Esophagus muscularis mucosa (tissue), 4 donors: ENCODE measurements at regions of chr2 and their contacts with region 1.

Region 1: GRCh38 chr2:36530178-36530982 is 67.6 kb downstream of the FEZ2 start:
- DNase-seq: no peak
- H3K4me3 ChIP-seq: no peak overlapping the region
- H3K27ac ChIP-seq: no peak overlapping the region
- H3K4me1 ChIP-seq: peaks cover 0 to 14% (median 4%) of the 10 kb centered on the region in 4 donors
- H3K27me3 ChIP-seq: no peaks in the 10 kb centered on the region
- CTCF ChIP-seq: no peak
- EP300 ChIP-seq: no peak
- POLR2A ChIP-seq: no peak

Region 2: DNA sequence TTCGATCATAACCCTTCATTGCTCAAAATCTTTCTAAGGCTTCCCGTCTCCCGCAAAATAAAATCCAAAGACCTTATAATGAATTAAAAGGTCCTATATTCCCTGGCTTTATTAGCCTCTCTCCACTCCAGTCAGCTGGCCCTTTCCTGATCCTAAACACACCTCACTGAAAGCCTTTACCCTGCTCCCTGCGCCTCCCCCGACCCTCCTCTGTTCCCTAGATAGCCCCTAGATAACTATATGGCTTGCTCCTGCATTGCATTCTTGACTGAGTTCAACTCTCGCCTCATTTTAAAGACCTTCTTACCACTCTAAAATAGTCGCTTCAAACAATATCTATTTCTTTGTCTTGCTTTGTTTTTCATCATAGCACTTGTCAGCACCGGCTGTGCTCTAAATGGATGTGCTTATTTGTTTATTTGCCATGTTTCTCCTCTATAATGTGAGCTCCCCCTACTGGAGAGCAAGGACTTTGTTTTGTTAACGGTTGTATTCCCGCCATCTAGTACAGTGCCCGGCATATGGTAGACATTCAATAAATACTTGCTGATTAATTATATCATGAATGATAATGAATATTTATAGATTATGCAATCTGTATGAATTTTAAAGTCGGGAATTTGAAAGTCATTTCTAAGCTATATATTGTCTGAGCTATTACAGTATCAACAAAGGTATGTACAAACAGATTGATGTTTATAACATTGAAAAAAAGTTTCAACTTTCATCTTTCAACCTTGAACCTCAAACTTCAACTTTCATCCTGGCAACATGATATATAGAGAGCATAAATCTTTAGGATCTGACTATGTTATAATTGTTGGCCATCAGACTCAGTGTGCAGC is 133.7 kb after region 1 on chr2:
- intact Hi-C with region 1: loop called (anchors 10 kb)
- DNase-seq: no peak
- H3K4me3 ChIP-seq: no peak overlapping the region
- H3K27ac ChIP-seq: peak overlapping the region in 1 of 4 donors; percentile 26
- H3K4me1 ChIP-seq: peaks cover 3 to 28% (median 26%) of the 10 kb centered on the region in 4 donors
- H3K27me3 ChIP-seq: no peaks in the 10 kb centered on the region
- CTCF ChIP-seq: peak; percentile 58 to 77 (median 63)
- EP300 ChIP-seq: no peak
- POLR2A ChIP-seq: no peak